Activated T-helper 2 cell treated with anti-CD3 and anti-CD28 coated beads, Interferon-gamma antibody, Interleukin-2, Interleukin-4, amounts not matched to agents 10 μg/mL and 5 μg/mL and 100 μg/mL, durations not matched to agents 14 hours and 24 hours and 36 hours (primary cell): ENCODE measurements at regions of chr5 and their contacts with region 1.

Region 1: GRCh38 chr5:134920848-134921575 is 16.1 kb downstream of the PCBD2 start:
- DNase-seq: no peak
- H3K4me3 Mint-ChIP-seq: no peak overlapping the region
- H3K27ac Mint-ChIP-seq: peak overlapping the region; percentile 77
- H3K4me1 Mint-ChIP-seq: peaks cover 41% of the 10 kb centered on the region
- H3K27me3 Mint-ChIP-seq: no peaks in the 10 kb centered on the region

Region 2: GRCh38 chr5:134511788-134512650 is 409.0 kb before region 1 on chr5:
- intact Hi-C with region 1: no loop called
- DNase-seq: no peak
- H3K4me3 Mint-ChIP-seq: no peak overlapping the region
- H3K27ac Mint-ChIP-seq: peak overlapping the region; percentile 78
- H3K4me1 Mint-ChIP-seq: peaks cover 36% of the 10 kb centered on the region
- H3K27me3 Mint-ChIP-seq: no peaks in the 10 kb centered on the region

Region 3: DNA sequence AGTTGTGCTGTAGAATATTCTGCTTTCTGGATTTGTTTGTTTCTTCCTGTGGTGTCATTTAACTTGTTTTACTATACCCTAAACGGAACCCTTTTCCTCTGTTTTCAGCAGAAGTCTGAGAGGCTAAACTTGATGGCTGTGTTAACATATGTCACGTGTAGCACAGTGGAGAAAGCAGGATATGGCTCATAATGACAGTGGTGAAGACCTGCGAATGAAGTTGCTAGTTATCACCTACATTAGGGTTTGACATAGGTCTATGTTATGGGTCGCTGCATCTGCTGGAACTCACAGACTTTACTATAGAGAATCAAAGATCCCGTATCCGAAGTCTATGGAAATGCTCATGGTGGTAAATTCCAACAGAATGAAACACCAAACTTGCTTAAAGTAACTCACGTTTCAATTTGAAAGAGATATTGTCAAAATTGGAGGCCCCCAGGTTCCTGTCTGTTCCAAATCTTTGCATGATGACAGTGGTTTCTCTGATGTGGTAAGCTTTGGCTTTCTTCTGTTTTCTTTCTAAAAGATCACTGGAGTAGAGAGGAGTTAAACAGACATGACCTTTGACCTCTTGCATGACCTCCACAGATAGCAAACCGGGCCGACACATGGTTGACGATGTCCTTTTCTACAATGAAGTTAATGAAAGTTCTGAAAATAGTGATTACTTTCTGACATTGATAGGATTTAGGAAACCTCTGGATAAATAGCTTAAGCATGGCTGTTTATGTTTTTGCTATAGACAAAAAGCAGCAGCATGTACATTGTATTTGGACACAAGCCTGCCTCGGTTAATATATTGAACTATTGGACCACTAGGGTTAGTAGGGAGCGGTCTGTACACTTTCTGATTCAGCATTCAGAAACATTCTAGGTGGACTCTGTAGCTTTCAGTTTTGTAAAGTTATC is 43.6 kb after region 1 on chr5:
- intact Hi-C with region 1: loop called (anchors 1 kb)
- DNase-seq: peak; percentile 14
- H3K4me3 Mint-ChIP-seq: peak overlapping the region; percentile 6
- H3K27ac Mint-ChIP-seq: peak overlapping the region; percentile 79
- H3K4me1 Mint-ChIP-seq: peaks cover 28% of the 10 kb centered on the region
- H3K27me3 Mint-ChIP-seq: no peaks in the 10 kb centered on the region